GM23248 (cell line): ENCODE measurements at regions of chr1 and their contacts with region 1.

Region 1: DNA sequence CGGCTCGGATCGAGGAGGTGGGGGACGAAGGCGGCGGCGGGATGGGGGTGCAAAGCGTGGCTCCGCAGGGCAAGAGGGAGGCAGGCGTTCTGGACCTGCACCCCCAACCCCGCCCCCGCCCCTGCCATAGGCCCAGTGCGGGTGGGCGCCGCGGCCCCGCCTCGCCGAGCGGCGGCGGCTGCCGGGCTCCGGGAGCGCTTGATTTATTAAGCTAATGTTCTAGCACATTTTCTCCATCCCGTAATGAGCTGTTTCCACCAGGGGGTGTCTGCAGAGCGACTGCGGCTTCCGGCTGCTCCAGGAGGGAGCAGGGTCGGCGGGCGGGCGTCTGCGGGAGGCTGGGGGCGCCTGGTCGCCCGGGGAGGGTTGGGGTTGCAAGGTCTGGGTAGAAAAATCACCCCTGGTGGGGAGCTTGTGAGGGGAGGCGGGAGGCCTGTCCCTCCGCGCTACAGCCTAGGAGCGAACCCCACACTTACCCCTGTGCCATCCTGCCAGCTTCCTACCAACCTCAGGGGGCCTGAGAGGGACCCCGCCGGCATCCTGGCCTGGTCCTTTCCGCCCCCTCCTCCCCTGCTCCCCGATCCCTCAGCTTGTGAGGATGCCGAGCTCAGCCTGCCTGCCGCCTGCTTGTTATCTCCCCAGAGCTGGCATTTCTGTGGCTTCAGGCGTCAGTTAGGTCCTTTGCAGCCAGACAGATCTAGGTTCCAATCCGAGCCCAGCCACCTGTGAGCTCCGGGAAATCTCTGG is 48.5 kb upstream of the ACOT11 start:
- DNase-seq: peak; percentile 78
- H3K4me3 ChIP-seq: peak overlapping the region; percentile 69
- H3K27ac ChIP-seq: no peak overlapping the region
- H3K4me1 ChIP-seq: no peaks in the 10 kb centered on the region
- H3K27me3 ChIP-seq: 0 out of 2 replicates have a peak, but pooled peaks cover 4% of the 10 kb centered on the region

Region 2: GRCh38 chr1:53860967-53861411 is 638.5 kb before region 1 on chr1:
- in situ Hi-C with region 1: loop called (anchors 25 kb)
- DNase-seq: peak; percentile 79
- H3K4me3 ChIP-seq: no peak overlapping the region
- H3K27ac ChIP-seq: no peak overlapping the region
- H3K4me1 ChIP-seq: no peaks in the 10 kb centered on the region
- H3K27me3 ChIP-seq: no peaks in the 10 kb centered on the region

Region 3: DNA sequence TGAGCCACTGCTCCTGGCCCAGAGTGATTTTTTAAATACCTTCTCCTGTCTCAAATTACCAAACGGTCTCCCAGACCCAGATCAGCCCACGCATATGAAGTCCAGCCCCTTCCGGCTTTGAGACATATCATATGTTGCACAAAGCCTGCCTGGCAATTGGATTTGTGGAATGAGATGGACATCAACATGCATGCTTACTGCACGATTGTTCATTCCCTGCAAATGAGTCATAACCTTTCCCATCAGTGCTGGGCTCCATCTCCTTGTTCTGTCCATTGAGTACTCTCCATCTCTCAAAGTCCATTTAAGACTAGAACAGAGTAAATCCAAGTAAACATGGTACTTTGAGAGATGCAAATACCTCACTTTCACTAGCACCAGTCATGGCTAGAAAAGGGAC is 1327.8 kb after region 1 on chr1:
- in situ Hi-C with region 1: no loop called
- DNase-seq: peak; percentile 94
- H3K4me3 ChIP-seq: no peak overlapping the region
- H3K27ac ChIP-seq: peak overlapping the region; percentile 69
- H3K4me1 ChIP-seq: peaks cover 33% of the 10 kb centered on the region
- H3K27me3 ChIP-seq: no peaks in the 10 kb centered on the region